CD4-positive, alpha-beta T cell (primary cell): ENCODE measurements at regions of chr21 and their contacts with region 1.

Region 1: DNA sequence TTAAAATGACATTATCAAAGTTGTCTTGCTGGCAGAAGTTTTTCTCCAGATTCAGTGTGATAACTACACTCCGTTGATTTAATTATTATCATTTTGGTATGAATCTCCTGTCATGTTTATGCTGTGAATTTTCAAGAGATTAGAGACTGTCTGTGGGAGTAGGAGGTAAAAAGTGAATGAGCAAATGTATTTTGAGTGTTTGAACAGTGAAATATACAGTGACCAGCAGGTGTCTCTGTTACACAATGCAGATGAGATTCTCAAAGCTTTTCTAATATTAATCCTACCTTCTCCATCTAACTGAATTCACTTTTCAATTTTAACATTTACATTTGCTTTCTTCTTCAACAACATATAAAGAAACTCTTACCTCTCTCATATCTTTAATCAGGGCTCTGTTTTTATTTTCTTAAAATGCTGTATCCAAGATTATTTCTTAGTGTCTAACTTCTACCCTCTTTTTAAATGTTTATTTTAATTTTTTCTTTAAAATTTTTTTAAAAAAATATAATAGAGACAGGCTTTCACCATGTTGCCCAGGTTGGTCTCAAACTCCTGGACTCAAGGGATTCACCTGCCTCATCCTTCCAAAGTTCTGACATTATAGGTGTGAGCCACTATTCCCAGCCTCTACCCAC is 20.9 kb upstream of the HSPA13 start:
- DNase-seq: peak in 4 of 14 experiments; percentile 12 to 70 (median 54)
- ATAC-seq: no peak
- H3K4me3 ChIP-seq: no peak overlapping the region
- H3K4me3 Mint-ChIP-seq: no peak overlapping the region
- H3K27ac ChIP-seq: no peak overlapping the region
- H3K27ac Mint-ChIP-seq: no peak overlapping the region
- H3K4me1 ChIP-seq: no peaks in the 10 kb centered on the region
- H3K4me1 Mint-ChIP-seq: no peaks in the 10 kb centered on the region
- H3K27me3 ChIP-seq: no peaks in the 10 kb centered on the region
- H3K27me3 Mint-ChIP-seq: no peaks in the 10 kb centered on the region
- CTCF ChIP-seq: peak; percentile 76

Region 2: GRCh38 chr21:14414932-14415508 is 11.2 kb after region 1 on chr21:
- CTCF ChIA-PET with region 1: interaction called, 4 read pairs
- POLR2A ChIA-PET with region 1: no interaction called
- intact Hi-C with region 1: loop called in 1 of 2 experiments (anchors 1 kb)
- DNase-seq: no peak
- ATAC-seq: no peak
- H3K4me3 ChIP-seq: no peak overlapping the region
- H3K4me3 Mint-ChIP-seq: no peak overlapping the region
- H3K27ac ChIP-seq: no peak overlapping the region
- H3K27ac Mint-ChIP-seq: no peak overlapping the region
- H3K4me1 ChIP-seq: no peaks in the 10 kb centered on the region
- H3K4me1 Mint-ChIP-seq: no peaks in the 10 kb centered on the region
- H3K27me3 ChIP-seq: no peaks in the 10 kb centered on the region
- H3K27me3 Mint-ChIP-seq: peaks cover 29% of the 10 kb centered on the region
- CTCF ChIP-seq: no peak

Region 3: GRCh38 chr21:14438211-14438610 is 34.4 kb after region 1 on chr21:
- CTCF ChIA-PET with region 1: no interaction called
- POLR2A ChIA-PET with region 1: no interaction called
- intact Hi-C with region 1: no loop called
- DNase-seq: no peak
- ATAC-seq: no peak
- H3K4me3 ChIP-seq: no peak overlapping the region
- H3K4me3 Mint-ChIP-seq: no peak overlapping the region
- H3K27ac ChIP-seq: no peak overlapping the region
- H3K27ac Mint-ChIP-seq: no peak overlapping the region
- H3K4me1 ChIP-seq: no peaks in the 10 kb centered on the region
- H3K4me1 Mint-ChIP-seq: no peaks in the 10 kb centered on the region
- H3K27me3 ChIP-seq: no peaks in the 10 kb centered on the region
- H3K27me3 Mint-ChIP-seq: no peaks in the 10 kb centered on the region
- CTCF ChIP-seq: no peak

Region 4: DNA sequence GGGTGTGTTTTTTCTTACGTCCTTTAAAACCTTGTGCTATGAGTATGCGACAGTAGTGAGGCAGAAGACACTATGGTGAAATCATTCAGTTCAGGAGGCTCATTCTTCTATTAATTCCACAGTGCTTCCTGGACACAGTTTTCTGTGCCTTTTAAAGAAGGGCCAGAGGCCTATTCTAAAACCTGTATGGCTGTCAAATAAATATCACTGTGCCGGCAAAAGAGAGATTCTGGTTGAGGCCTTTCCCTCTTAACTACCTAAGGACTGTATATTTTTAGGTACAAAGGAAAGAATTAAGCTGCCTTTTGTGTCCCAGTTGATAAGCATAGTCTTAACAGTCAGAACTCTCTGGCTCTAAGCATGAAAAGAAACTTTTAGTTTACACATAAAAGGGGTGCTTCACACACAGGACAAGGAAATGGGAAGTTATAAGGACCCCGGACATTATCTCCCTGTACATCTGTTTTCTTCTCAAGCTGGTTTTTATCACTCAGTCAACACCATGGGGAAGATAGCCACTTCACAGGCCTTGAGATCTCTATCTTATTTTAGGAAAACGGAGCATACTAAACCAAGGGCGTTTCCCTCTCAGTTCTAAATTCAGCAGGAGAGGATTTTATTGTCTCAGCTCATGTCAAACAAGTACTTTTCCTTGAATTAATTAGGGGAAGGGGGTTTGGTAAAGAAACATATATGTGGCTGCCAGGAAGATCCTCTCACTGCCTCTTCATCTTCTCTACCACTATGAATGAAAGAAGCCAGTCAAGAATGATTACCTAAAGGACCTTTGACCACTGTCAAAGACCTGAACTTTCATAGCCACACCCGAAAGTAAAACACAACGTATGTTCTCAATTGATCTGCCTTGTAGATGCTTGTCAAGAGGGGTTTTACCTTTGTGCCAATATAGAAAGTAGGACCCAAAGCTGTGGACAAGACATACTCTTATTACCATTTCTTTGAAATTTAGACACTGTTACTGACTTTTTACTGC is 50.5 kb after region 1 on chr21:
- CTCF ChIA-PET with region 1: no interaction called
- POLR2A ChIA-PET with region 1: no interaction called
- intact Hi-C with region 1: no loop called
- DNase-seq: no peak
- ATAC-seq: no peak
- H3K4me3 ChIP-seq: no peak overlapping the region
- H3K4me3 Mint-ChIP-seq: no peak overlapping the region
- H3K27ac ChIP-seq: no peak overlapping the region
- H3K27ac Mint-ChIP-seq: no peak overlapping the region
- H3K4me1 ChIP-seq: no peaks in the 10 kb centered on the region
- H3K4me1 Mint-ChIP-seq: peaks cover 12% of the 10 kb centered on the region
- H3K27me3 ChIP-seq: no peaks in the 10 kb centered on the region
- H3K27me3 Mint-ChIP-seq: no peaks in the 10 kb centered on the region
- CTCF ChIP-seq: no peak

Region 5: DNA sequence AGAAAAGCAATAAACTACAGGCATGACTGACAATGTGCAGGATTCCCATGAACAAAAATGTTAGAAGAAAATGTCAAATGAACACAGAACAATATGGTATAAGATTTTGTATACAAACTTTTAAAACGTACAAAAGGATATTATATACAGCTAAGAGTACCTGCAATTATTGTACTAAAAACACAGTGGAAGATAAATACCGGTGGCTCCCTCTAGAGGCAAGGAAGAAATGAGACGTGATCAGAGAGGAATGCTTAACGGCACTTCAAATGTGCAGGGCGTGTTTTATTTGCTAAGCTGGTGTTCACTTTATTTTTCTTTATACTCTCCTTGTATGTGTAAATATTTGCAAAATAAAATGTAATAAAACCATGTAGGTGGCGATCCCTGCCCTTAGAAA is 334.1 kb after region 1 on chr21:
- CTCF ChIA-PET with region 1: interaction called, 23 read pairs
- POLR2A ChIA-PET with region 1: interaction called, 3 read pairs
- intact Hi-C with region 1: loop called (anchors 1 to 2 kb)
- DNase-seq: peak in 11 of 14 experiments; percentile 8 to 86 (median 34)
- ATAC-seq: peak; percentile 95
- H3K4me3 ChIP-seq: no peak overlapping the region
- H3K4me3 Mint-ChIP-seq: no peak overlapping the region
- H3K27ac ChIP-seq: no peak overlapping the region
- H3K27ac Mint-ChIP-seq: no peak overlapping the region
- H3K4me1 ChIP-seq: no peaks in the 10 kb centered on the region
- H3K4me1 Mint-ChIP-seq: peaks cover 5% of the 10 kb centered on the region
- H3K27me3 ChIP-seq: no peaks in the 10 kb centered on the region
- H3K27me3 Mint-ChIP-seq: no peaks in the 10 kb centered on the region
- CTCF ChIP-seq: peak; percentile 75

Region 6: GRCh38 chr21:14773777-14774345 is 370.1 kb after region 1 on chr21:
- CTCF ChIA-PET with region 1: interaction called, 6 read pairs
- POLR2A ChIA-PET with region 1: no interaction called
- intact Hi-C with region 1: loop called (anchors 1 to 2 kb)
- DNase-seq: peak; percentile 25 to 70 (median 43)
- ATAC-seq: peak; percentile 54
- H3K4me3 ChIP-seq: no peak overlapping the region
- H3K4me3 Mint-ChIP-seq: no peak overlapping the region
- H3K27ac ChIP-seq: no peak overlapping the region
- H3K27ac Mint-ChIP-seq: no peak overlapping the region
- H3K4me1 ChIP-seq: no peaks in the 10 kb centered on the region
- H3K4me1 Mint-ChIP-seq: no peaks in the 10 kb centered on the region
- H3K27me3 ChIP-seq: peaks cover 4% of the 10 kb centered on the region in 2 experiments
- H3K27me3 Mint-ChIP-seq: no peaks in the 10 kb centered on the region
- CTCF ChIP-seq: peak; percentile 71

Region 7: DNA sequence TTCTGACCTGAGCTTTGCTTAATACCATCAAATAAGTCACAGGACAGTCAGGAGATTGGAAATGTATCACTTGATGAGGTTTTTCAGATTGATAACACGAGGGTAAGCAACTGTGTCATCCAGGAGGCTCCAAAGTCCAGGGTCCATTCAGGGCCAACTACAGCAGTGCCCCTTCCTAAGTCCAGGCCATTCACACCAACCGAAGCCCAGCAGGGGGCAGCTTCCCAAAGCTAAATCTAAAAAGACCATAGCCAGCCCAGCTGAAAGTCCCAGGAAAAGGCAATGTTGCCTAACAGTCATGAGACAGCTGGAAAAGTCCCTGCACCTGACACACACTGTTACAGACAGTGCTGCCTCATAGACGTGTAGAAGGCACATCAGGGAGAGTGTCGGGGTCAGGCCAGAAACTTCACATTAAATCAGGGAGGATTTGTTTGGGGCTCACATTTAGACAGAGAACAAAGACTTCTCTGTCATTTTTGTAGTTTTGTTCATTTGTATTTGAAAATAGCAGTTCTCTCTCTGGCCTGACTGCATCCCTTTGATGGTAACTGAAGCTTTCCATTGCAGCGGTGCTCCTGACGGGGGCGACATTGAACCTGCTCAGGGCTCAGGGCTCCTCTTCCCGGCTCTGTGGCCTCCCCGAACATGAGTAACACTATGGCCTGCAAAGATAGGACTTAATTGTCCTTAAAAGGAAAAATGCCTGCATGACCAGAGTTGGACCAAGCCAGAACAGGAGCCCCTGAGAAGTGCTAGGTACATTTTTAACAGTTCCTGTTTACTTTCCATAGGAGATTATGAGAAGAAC is 460.6 kb after region 1 on chr21:
- CTCF ChIA-PET with region 1: interaction called, 3 read pairs
- POLR2A ChIA-PET with region 1: no interaction called
- intact Hi-C with region 1: loop called (anchors 2 to 5 kb)
- DNase-seq: peak in 5 of 14 experiments; percentile 7 to 66 (median 24)
- ATAC-seq: peak; percentile 49
- H3K4me3 ChIP-seq: no peak overlapping the region
- H3K4me3 Mint-ChIP-seq: no peak overlapping the region
- H3K27ac ChIP-seq: no peak overlapping the region
- H3K27ac Mint-ChIP-seq: no peak overlapping the region
- H3K4me1 ChIP-seq: no peaks in the 10 kb centered on the region
- H3K4me1 Mint-ChIP-seq: peaks cover 6% of the 10 kb centered on the region
- H3K27me3 ChIP-seq: no peaks in the 10 kb centered on the region
- H3K27me3 Mint-ChIP-seq: no peaks in the 10 kb centered on the region
- CTCF ChIP-seq: peak; percentile 29

Region 8: GRCh38 chr21:15592271-15592860 is 1188.6 kb after region 1 on chr21:
- CTCF ChIA-PET with region 1: no interaction called
- POLR2A ChIA-PET with region 1: no interaction called
- intact Hi-C with region 1: loop called in 1 of 2 experiments (anchors 5 kb)
- DNase-seq: peak in 4 of 14 experiments; percentile 3 to 65 (median 58)
- ATAC-seq: peak; percentile 29
- H3K4me3 ChIP-seq: no peak overlapping the region
- H3K4me3 Mint-ChIP-seq: no peak overlapping the region
- H3K27ac ChIP-seq: no peak overlapping the region
- H3K27ac Mint-ChIP-seq: no peak overlapping the region
- H3K4me1 ChIP-seq: no peaks in the 10 kb centered on the region
- H3K4me1 Mint-ChIP-seq: no peaks in the 10 kb centered on the region
- H3K27me3 ChIP-seq: no peaks in the 10 kb centered on the region
- H3K27me3 Mint-ChIP-seq: no peaks in the 10 kb centered on the region
- CTCF ChIP-seq: peak; percentile 61